Vagina (tissue), 2 donors: ENCODE measurements at regions of chr14 and their contacts with region 1.

Region 1: DNA sequence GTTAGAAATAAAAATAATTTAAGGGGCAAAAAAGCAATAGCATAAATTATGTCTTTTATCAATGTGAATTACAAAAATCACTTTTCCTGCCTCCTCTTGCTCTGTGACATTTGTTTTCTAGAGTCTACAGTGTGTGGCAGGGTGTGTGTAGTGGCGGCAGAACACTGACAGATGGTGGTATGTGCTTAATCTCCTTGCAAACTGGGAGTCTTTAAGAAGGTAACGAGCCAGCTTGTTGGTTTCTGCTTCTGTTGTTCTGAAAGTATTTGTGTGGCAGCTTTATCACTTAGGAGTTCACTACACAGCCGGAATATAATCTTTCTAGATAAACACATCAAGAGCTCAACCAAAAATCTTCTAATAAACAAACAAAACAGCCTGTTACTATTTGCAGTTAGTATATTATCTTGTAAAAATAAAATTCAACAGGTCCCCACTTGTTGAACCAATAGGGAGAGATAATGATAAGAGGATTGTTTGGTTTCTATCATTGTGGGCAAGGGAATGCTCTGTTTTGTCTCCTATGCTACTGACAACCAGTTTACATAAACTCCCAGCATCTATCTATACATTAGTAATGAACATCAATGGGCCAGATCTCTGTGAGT is 13.0 kb downstream of the CDKL1 start:
- DNase-seq: no peak
- H3K4me3 ChIP-seq: no peak overlapping the region
- H3K27ac ChIP-seq: no peak overlapping the region
- H3K4me1 ChIP-seq: peaks cover 6% of the 10 kb centered on the region
- H3K27me3 ChIP-seq: no peaks in the 10 kb centered on the region
- CTCF ChIP-seq: no peak
- POLR2A ChIP-seq: no peak

Region 2: GRCh38 chr14:49879683-49880204 is 504.0 kb before region 1 on chr14:
- intact Hi-C with region 1: loop called (anchors 10 kb)
- DNase-seq: peak in 1 of 2 donors; percentile 83
- H3K4me3 ChIP-seq: no peak overlapping the region
- H3K27ac ChIP-seq: no peak overlapping the region
- H3K4me1 ChIP-seq: peaks cover 13% of the 10 kb centered on the region
- H3K27me3 ChIP-seq: no peaks in the 10 kb centered on the region
- CTCF ChIP-seq: peak in 2 of 3 experiments; percentile 11 to 42
- POLR2A ChIP-seq: no peak

Region 3: DNA sequence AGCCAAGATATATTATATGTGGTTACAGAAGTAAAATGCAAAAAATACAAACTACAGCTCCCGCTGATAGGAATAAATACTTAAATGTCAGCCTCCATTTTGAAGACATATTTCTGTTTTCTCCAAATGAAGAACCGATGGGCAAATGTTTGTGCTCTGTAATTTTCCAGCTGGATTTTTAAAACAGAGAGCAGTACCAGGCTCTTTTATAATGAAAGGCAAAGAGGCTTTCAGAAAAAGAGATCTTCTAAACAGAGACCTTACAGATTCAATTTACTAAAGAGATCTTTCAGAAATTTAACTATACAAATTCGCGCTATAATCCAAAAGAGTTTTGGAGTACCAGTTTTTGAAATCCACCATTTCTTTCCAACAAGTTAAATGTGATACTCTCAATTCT is 128.7 kb after region 1 on chr14:
- intact Hi-C with region 1: no loop called
- DNase-seq: no peak
- H3K4me3 ChIP-seq: no peak overlapping the region
- H3K27ac ChIP-seq: no peak overlapping the region
- H3K4me1 ChIP-seq: peaks cover 29% of the 10 kb centered on the region
- H3K27me3 ChIP-seq: no peaks in the 10 kb centered on the region
- CTCF ChIP-seq: no peak
- POLR2A ChIP-seq: no peak